H1 (cell line): ENCODE measurements at regions of chr16 and their contacts with region 1.

Region 1: GRCh38 chr16:23060458-23061320 is 88.6 kb downstream of the USP31 start:
- DNase-seq: peak; percentile 9 to 83
- H3K4me3 ChIP-seq: no peak overlapping the region
- H3K27ac ChIP-seq: no peak overlapping the region
- H3K4me1 ChIP-seq: peaks cover 0 to 13% (median 8%) of the 10 kb centered on the region in 4 experiments; a peak in 3 of 7 replicates
- H3K27me3 ChIP-seq: no peaks in the 10 kb centered on the region
- CTCF ChIP-seq: peak; percentile 49 to 79 (median 73)
- EP300 ChIP-seq: no peak
- POLR2A ChIP-seq: no peak
- RAD21 ChIP-seq: peak; percentile 83 to 88

Region 2: GRCh38 chr16:22948603-22949368 is 111.9 kb before region 1 on chr16:
- CTCF ChIA-PET with region 1: interaction called, 10 read pairs
- POLR2A ChIA-PET with region 1: no interaction called
- DNase-seq: peak; percentile 56 to 92
- H3K4me3 ChIP-seq: no peak overlapping the region
- H3K27ac ChIP-seq: no peak overlapping the region
- H3K4me1 ChIP-seq: peaks cover 0 to 8% (median 3%) of the 10 kb centered on the region in 4 experiments; a peak in 3 of 7 replicates
- H3K27me3 ChIP-seq: peaks cover 0 to 9% (median 3%) of the 10 kb centered on the region in 4 experiments; a peak in 4 of 7 replicates
- CTCF ChIP-seq: peak; percentile 73 to 99 (median 88)
- EP300 ChIP-seq: no peak
- POLR2A ChIP-seq: no peak
- RAD21 ChIP-seq: peak; percentile 82 to 84

Region 3: DNA sequence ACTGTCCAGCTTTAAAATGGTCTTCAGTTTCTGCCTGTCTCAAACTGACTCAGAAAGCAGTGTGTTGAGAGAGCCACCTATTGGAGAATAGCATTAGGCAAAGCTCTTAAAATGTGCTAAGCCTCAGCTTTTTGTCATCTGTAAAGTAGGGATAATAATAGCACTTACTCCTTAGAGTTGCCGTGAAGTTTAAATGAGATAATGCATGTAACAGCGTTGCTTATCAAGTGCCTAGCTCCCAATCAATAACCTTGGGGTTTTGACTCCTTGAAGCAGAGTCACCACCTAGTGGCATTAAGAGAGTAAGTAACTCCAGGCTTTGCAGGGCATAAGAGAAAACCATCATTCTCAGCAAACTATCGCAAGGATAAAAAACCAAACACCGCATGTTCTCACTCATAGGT is 83.4 kb before region 1 on chr16:
- CTCF ChIA-PET with region 1: interaction called, 21 read pairs
- POLR2A ChIA-PET with region 1: no interaction called
- DNase-seq: peak in 1 of 2 experiments; percentile 26
- H3K4me3 ChIP-seq: no peak overlapping the region
- H3K27ac ChIP-seq: no peak overlapping the region
- H3K4me1 ChIP-seq: no peaks in the 10 kb centered on the region
- H3K27me3 ChIP-seq: no peaks in the 10 kb centered on the region; a peak in 1 of 7 replicates
- CTCF ChIP-seq: peak in 2 of 3 experiments; percentile 53 to 55; a peak in 3 of 4 replicates
- EP300 ChIP-seq: no peak
- POLR2A ChIP-seq: no peak
- RAD21 ChIP-seq: peak; percentile 63 to 69

Region 4: GRCh38 chr16:23029733-23030420 is 30.8 kb before region 1 on chr16:
- CTCF ChIA-PET with region 1: interaction called, 12 read pairs
- POLR2A ChIA-PET with region 1: no interaction called
- DNase-seq: no peak
- H3K4me3 ChIP-seq: no peak overlapping the region
- H3K27ac ChIP-seq: no peak overlapping the region
- H3K4me1 ChIP-seq: peaks cover 2 to 7% (median 4%) of the 10 kb centered on the region in 4 experiments; a peak in 6 of 7 replicates
- H3K27me3 ChIP-seq: no peaks in the 10 kb centered on the region
- CTCF ChIP-seq: no peak
- EP300 ChIP-seq: no peak
- POLR2A ChIP-seq: no peak
- RAD21 ChIP-seq: no peak

Region 5: GRCh38 chr16:23072084-23072599 is 11.5 kb after region 1 on chr16:
- CTCF ChIA-PET with region 1: interaction called, 22 read pairs
- POLR2A ChIA-PET with region 1: no interaction called
- DNase-seq: no peak
- H3K4me3 ChIP-seq: no peak overlapping the region
- H3K27ac ChIP-seq: no peak overlapping the region
- H3K4me1 ChIP-seq: no peaks in the 10 kb centered on the region
- H3K27me3 ChIP-seq: no peaks in the 10 kb centered on the region
- CTCF ChIP-seq: no peak
- EP300 ChIP-seq: no peak
- POLR2A ChIP-seq: no peak
- RAD21 ChIP-seq: no peak

Region 6: DNA sequence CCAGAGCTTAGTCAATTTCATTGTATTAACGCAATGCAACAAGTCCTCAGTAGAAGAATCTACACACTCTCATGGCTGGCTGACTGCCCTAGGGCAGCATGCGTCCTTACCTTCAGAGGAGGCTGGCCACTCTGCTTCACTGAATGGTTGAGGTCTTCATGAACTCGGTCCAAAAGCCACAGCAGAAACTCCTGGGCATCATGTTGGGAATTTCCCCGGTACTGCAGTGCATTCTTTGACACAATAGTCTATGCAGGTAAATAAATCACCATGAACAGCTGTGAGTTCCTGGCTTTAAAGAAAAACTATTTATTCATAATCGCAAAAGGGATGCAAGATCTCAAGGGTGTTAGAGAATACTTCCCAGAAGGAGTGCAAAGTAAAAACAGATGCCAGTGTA is 47.2 kb after region 1 on chr16:
- CTCF ChIA-PET with region 1: no interaction called
- POLR2A ChIA-PET with region 1: no interaction called
- DNase-seq: no peak
- H3K4me3 ChIP-seq: no peak overlapping the region
- H3K27ac ChIP-seq: no peak overlapping the region
- H3K4me1 ChIP-seq: peaks cover 0 to 4% (median under 1%) of the 10 kb centered on the region in 4 experiments; a peak in 2 of 7 replicates
- H3K27me3 ChIP-seq: no peaks in the 10 kb centered on the region
- CTCF ChIP-seq: no peak
- EP300 ChIP-seq: no peak
- POLR2A ChIP-seq: no peak
- RAD21 ChIP-seq: no peak